ENCODE measurements at regions of chr10 and their contacts with region 1.

Region 1: DNA sequence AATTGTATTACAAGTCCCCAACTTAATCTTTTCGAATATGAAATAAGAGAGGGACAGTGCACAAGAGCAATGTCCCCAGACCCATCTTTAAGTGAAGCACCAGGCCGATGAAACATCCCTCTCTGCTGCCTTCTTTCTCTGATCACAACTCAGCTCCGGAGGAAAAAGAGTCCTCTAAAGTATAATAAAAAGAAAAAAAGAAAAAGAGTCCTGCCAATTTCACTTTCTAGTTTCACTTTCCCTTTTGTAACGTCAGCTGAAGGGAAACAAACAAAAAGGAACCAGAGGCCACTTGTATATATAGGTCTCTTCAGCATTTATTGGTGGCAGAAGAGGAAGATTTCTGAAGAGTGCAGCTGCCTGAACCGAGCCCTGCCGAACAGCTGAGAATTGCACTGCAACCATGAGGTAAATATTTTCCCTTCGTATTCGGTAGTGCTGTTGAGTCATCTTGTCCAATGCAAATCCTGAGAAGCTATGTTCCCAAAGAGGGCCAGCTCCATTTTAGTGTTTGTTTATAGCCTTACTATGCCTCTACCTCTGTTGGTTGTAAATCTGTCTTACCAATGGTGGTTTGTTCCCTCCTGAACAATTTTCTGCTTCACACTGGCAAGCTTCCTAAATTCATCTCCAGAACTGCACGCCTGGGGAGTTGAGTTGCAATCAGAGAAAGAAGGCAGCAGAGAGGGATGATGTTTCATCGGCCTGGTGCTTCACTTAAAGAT is at the start of gene IFIT2:
- DNase-seq: peak in 26 of 35 experiments; percentile 4 to 76 (median 23)
- ATAC-seq: peak; percentile 72 to 79 (median 73)
- H3K4me3 ChIP-seq: peak within 1 kb of the TSS; percentile 64 to 83
- H3K4me3 Mint-ChIP-seq: peak within 1 kb of the TSS; percentile 85 to 96 (median 88)
- H3K27ac ChIP-seq: peak within 1 kb of the TSS; percentile 90
- H3K27ac Mint-ChIP-seq: peak within 1 kb of the TSS; percentile 98 to 99
- H3K4me1 ChIP-seq: peaks cover 22% of the 10 kb centered on the region in 2 experiments
- H3K4me1 Mint-ChIP-seq: peaks cover 32 to 54% (median 40%) of the 10 kb centered on the region in 3 donors
- H3K27me3 ChIP-seq: no peaks in the 10 kb centered on the region
- H3K27me3 Mint-ChIP-seq: no peaks in the 10 kb centered on the region
- total RNA-seq, gene IFIT2: 6.4 to 13.9 (median 6.8) TPM

Region 2: DNA sequence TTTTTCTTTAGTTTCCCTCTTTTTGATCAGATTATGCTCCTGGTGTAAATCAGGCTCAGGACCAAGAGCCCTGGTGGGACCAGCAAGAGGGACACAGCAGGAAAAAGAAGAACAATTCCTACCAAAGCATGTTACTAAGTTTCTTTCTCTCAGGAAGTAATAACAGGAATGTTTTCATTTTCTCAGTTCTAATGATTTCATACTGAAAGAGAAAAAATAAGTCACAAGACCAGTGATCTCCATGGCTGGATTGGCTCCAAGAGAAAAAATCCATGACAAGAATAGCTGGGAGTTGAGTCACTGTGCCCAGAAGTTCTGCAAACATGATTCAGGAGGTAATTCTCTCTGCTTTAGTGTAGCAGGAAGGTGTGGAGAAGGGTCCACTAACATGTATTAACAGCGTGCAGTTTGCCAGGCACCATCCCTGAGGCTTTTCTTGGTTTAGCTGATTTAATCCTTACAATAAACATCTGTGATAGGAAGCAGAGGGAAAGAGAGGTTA is 23.8 kb before region 1 on chr10:
- CTCF ChIA-PET with region 1: no interaction called
- POLR2A ChIA-PET with region 1: no interaction called
- DNase-seq: no peak
- ATAC-seq: no peak
- H3K4me3 ChIP-seq: no peak overlapping the region
- H3K4me3 Mint-ChIP-seq: no peak overlapping the region
- H3K27ac ChIP-seq: no peak overlapping the region
- H3K27ac Mint-ChIP-seq: no peak overlapping the region
- H3K4me1 ChIP-seq: no peaks in the 10 kb centered on the region
- H3K4me1 Mint-ChIP-seq: no peaks in the 10 kb centered on the region
- H3K27me3 ChIP-seq: no peaks in the 10 kb centered on the region
- H3K27me3 Mint-ChIP-seq: peaks cover 2 to 4% of the 10 kb centered on the region in 2 donors

Region 3: DNA sequence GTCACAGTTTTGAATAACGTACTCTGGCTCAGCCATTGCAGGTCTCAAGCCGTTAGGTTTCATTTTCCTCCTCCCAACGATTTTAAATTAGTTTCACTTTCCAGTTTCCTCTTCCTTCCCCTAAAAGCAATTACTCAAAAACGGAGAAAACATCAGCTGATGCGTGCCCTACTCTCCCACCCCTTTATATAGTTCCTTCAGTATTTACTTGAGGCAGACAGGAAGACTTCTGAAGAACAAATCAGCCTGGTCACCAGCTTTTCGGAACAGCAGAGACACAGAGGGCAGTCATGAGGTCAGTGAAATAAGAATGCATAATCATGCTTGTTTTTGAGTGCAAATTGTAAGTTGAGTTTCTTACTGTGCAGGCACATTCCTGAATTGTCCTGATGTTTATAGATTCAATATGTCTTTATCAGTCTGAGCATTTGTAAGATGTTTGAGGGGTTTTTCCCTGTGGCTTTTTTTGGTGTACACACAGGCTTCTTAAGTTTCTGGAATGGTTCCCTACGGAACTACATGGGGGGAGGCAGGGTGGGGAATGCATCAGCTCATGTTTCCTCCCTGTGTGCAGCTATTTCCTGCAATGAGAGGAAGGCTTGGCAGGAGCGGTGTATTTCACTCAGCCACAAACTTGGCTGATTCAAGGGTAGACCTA is 26.0 kb after region 1 on chr10 and contains the start of gene IFIT3:
- CTCF ChIA-PET with region 1: interaction called in 1 of 2 experiments, 15 read pairs
- POLR2A ChIA-PET with region 1: interaction called, 6 to 10 read pairs
- DNase-seq: peak in 1 of 35 experiments; percentile 59
- ATAC-seq: peak; percentile 30 to 46 (median 46)
- H3K4me3 ChIP-seq: peak within 1 kb of the TSS; percentile 55 to 64
- H3K4me3 Mint-ChIP-seq: peak within 1 kb of the TSS; percentile 91 to 95 (median 92)
- H3K27ac ChIP-seq: peak within 1 kb of the TSS; percentile 66
- H3K27ac Mint-ChIP-seq: peak within 1 kb of the TSS; percentile 93 to 94
- H3K4me1 ChIP-seq: peaks cover 30% of the 10 kb centered on the region in 2 experiments
- H3K4me1 Mint-ChIP-seq: peaks cover 51 to 58% (median 57%) of the 10 kb centered on the region in 3 donors
- H3K27me3 ChIP-seq: no peaks in the 10 kb centered on the region
- H3K27me3 Mint-ChIP-seq: no peaks in the 10 kb centered on the region
- total RNA-seq, gene IFIT3: 2.3 to 4.4 (median 3.9) TPM

Region 4: DNA sequence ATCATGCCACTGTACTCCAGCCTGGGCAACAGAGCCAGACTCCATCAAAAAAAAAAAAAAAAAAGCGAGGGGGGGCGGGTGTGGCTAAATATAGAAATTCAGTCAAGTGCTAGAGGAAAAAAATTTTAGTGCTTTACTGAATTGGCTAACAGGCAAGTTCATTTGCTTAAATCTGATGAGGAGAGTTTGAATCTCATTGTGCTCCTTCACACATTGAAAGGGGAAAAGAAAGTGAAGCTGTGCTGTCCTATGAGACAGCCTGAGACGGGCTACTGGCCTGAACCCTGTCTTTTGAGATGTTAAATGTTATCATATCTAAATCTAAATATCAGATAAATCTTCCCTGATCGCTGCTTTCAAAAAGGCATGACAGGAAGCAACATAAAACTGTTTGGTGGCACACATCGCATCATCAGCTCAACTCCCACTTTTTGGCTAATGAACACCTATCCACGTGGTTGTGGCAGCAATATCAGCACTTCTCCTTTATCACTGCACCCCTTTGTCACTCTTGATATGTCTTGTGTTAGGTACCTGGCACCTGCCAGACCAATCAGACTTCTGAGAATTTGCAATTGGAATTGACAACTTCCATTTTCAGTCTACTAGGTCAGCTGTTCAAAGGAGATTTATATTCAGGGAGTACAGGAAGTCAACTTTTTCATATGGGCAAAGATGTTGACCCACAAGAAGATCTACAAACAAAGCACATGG is 62.0 kb after region 1 on chr10:
- CTCF ChIA-PET with region 1: interaction called, 5 to 12 read pairs
- POLR2A ChIA-PET with region 1: interaction called, 3 to 7 read pairs
- DNase-seq: no peak
- ATAC-seq: no peak
- H3K4me3 ChIP-seq: no peak overlapping the region
- H3K4me3 Mint-ChIP-seq: no peak overlapping the region
- H3K27ac ChIP-seq: no peak overlapping the region
- H3K27ac Mint-ChIP-seq: no peak overlapping the region
- H3K4me1 ChIP-seq: peaks cover 2 to 6% of the 10 kb centered on the region in 2 experiments
- H3K4me1 Mint-ChIP-seq: peaks cover 20 to 32% (median 21%) of the 10 kb centered on the region in 3 donors
- H3K27me3 ChIP-seq: no peaks in the 10 kb centered on the region
- H3K27me3 Mint-ChIP-seq: peaks cover 0 to 3% of the 10 kb centered on the region in 2 donors

Region 5: DNA sequence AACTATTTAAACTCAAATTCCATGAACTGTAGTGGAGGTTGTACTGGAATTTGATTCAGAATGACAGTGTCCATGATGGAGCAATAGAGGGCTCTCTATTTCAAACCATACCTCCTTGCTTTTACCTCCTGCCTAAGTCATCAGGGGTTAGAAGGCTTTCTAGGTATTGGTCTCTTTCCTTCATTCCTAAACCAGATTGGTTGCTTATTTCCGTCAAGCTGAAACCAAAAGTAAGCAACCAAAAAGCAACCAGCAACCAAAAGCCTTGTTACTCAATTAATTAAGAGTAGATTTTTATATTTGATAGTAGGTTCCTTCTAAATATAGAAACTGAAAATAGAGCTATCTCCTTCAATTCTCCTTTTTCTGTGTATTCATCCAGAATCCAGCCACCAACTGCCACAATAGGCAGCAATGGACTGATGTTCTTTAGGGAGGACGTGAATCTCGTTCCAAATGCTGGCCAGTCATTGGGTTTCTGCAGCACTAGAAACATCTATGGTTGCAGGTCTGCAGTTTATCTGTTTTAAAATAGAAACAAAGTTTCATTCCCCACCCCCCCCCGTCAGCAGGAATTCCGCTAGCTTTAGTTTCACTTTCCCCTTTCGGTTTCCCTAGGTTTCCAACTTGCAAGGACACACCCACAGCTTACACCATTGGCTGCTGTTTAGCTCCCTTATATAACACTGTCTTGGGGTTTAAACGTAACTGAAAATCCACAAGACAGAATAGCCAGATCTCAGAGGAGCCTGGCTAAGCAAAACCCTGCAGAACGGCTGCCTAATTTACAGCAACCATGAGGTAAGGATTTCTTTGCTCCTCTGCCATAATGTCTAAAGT is 90.3 kb after region 1 on chr10 and contains the start of gene IFIT1:
- CTCF ChIA-PET with region 1: interaction called in 1 of 2 experiments, 10 read pairs
- POLR2A ChIA-PET with region 1: interaction called in 1 of 2 experiments, 4 read pairs
- DNase-seq: peak in 33 of 35 experiments; percentile 11 to 88 (median 39)
- ATAC-seq: peak; percentile 93 to 96 (median 94)
- H3K4me3 ChIP-seq: peak within 1 kb of the TSS; percentile 78 to 79
- H3K4me3 Mint-ChIP-seq: peak within 1 kb of the TSS; percentile 80 to 90 (median 83)
- H3K27ac ChIP-seq: peak within 1 kb of the TSS; percentile 91
- H3K27ac Mint-ChIP-seq: peak within 1 kb of the TSS; percentile 90 to 94
- H3K4me1 ChIP-seq: peaks cover 10 to 15% of the 10 kb centered on the region in 2 experiments
- H3K4me1 Mint-ChIP-seq: peaks cover 26 to 52% (median 43%) of the 10 kb centered on the region in 3 donors
- H3K27me3 ChIP-seq: no peaks in the 10 kb centered on the region
- H3K27me3 Mint-ChIP-seq: no peaks in the 10 kb centered on the region
- total RNA-seq, gene IFIT1: 1.7 to 5.5 (median 3.0) TPM